Endothelial cell of umbilical vein (primary cell): ENCODE measurements at regions of chr4 and their contacts with region 1.

Region 1: GRCh38 chr4:158209825-158210807 is at the start of gene TMEM144:
- DNase-seq: peak; percentile 93
- H3K4me3 ChIP-seq: peak within 1 kb of the TSS; percentile 23 to 59 (median 24)
- H3K27ac ChIP-seq: peak within 1 kb of the TSS; percentile 67
- H3K4me1 ChIP-seq: peaks cover 15% of the 10 kb centered on the region
- H3K27me3 ChIP-seq: no peaks in the 10 kb centered on the region
- CTCF ChIP-seq: no peak
- POLR2A ChIP-seq: peak; percentile 44
- total RNA-seq, gene TMEM144: 23.0 and 23.9 TPM in 2 replicates

Region 2: DNA sequence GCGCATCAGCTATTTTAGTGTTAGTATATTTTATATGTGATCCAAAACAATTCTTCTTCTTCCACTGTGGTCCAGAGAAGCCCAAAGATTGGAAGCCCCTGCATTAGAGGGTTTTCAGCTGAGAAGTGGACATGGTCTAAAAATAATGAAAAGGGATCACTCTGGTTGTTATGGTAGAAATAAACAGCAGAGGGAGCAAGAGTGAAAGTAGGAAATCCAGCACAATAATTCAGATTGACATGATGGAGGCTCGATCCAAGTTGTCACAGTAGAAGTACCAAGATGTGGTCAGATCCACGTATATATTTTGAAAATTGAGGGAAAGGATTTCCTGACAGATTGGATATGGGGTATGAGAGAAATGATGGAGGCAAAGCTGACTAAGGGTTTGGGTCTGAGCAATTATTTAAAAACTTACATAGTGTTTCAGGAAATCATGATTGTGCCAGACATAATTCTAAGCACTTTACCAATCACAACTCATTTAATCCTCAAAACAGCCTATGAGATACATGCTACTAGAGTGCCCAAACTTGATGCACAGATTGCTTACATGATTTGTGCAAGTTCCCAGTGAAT is 16.9 kb before region 1 on chr4:
- CTCF ChIA-PET with region 1: interaction called, 14 read pairs
- POLR2A ChIA-PET with region 1: no interaction called
- dilution Hi-C with region 1: no loop called
- intact Hi-C with region 1: no loop called
- DNase-seq: peak; percentile 58
- H3K4me3 ChIP-seq: no peak overlapping the region
- H3K27ac ChIP-seq: no peak overlapping the region
- H3K4me1 ChIP-seq: no peaks in the 10 kb centered on the region
- H3K27me3 ChIP-seq: no peaks in the 10 kb centered on the region
- CTCF ChIP-seq: peak; percentile 38 to 40
- POLR2A ChIP-seq: no peak